ENCODE measurements at regions of chr17 and their contacts with region 1.

Region 1: GRCh38 chr17:19977311-19978208 is at the start of gene AKAP10:
- DNase-seq: peak; percentile 86 to 99 (median 94)

Region 2: GRCh38 chr17:19867064-19867313 is 110.6 kb before region 1 on chr17:
- intact Hi-C with region 1: loop called (anchors 2 kb)
- DNase-seq: peak; percentile 51 to 96 (median 74)